ENCODE measurements at regions of chr7 and their contacts with region 1.

Region 1: DNA sequence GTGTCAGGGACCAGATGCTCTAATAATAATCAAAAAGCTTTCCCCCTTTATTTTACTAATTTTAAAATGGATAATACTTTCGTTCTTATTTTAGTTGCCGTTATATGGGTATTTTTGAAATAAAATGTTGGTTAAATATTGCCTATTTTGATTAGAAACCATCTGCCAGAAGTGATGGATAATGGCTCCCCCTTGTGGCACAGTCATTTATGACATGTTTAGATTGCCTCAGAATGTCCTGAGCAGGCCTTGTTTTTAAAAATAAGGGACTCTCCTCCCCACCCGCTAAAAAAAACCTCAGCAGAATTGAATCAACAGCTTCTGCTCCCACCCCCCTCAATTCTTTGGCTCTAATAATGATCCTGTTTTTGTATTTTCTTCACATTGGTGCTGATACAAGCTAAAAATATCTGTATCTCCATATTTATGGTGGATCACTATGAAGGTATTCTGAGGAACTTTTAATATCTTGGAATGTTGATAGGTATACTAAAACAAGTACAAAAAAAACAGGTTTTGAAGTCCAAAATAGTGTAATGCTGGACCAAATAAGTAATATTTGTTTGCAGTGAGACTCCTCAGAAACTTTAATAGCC is 38.8 kb downstream of the TMEM60 start:
- DNase-seq: peak in 1 of 3 donors; percentile 95
- ATAC-seq: peak; percentile 86
- H3K4me3 ChIP-seq: no peak overlapping the region
- H3K4me1 ChIP-seq: no peaks in the 10 kb centered on the region
- CTCF ChIP-seq: peak; percentile 51

Region 2: GRCh38 chr7:77657427-77658224 is 101.8 kb before region 1 on chr7:
- intact Hi-C with region 1: loop called (anchors 5 to 10 kb)
- DNase-seq: peak in 1 of 3 donors; percentile 76
- ATAC-seq: peak; percentile 49
- H3K4me3 ChIP-seq: no peak overlapping the region
- H3K4me1 ChIP-seq: peaks cover 33% of the 10 kb centered on the region
- CTCF ChIP-seq: no peak

Measured in mucosa of descending colon (tissue), 3 donors.